Transverse colon (tissue), 4 donors: ENCODE measurements at regions of chr14 and their contacts with region 1.

Region 1: GRCh38 chr14:54338696-54339317 is 58.0 kb upstream of the CDKN3 start:
- DNase-seq: no peak
- H3K4me3 ChIP-seq: no peak overlapping the region
- H3K27ac ChIP-seq: no peak overlapping the region
- H3K4me1 ChIP-seq: peaks cover 0 to 9% (median 4%) of the 10 kb centered on the region in 4 donors
- H3K27me3 ChIP-seq: no peaks in the 10 kb centered on the region
- CTCF ChIP-seq: peak in 3 of 5 experiments; percentile 17 to 32 (median 28)
- EP300 ChIP-seq: no peak
- POLR2A ChIP-seq: no peak

Region 2: GRCh38 chr14:53062856-53063255 is 1276.0 kb before region 1 on chr14:
- in situ Hi-C with region 1: no loop called
- intact Hi-C with region 1: loop called (anchors 5 kb)
- DNase-seq: no peak
- H3K4me3 ChIP-seq: no peak overlapping the region
- H3K27ac ChIP-seq: no peak overlapping the region
- H3K4me1 ChIP-seq: no peaks in the 10 kb centered on the region
- H3K27me3 ChIP-seq: no peaks in the 10 kb centered on the region
- CTCF ChIP-seq: no peak
- EP300 ChIP-seq: no peak
- POLR2A ChIP-seq: no peak

Region 3: GRCh38 chr14:53539489-53540126 is 799.2 kb before region 1 on chr14:
- in situ Hi-C with region 1: loop called (anchors 10 to 25 kb)
- intact Hi-C with region 1: loop called (anchors 10 kb)
- DNase-seq: peak; percentile 78
- H3K4me3 ChIP-seq: no peak overlapping the region
- H3K27ac ChIP-seq: peak overlapping the region; percentile 53 to 77 (median 57)
- H3K4me1 ChIP-seq: peaks cover 0 to 38% (median 7%) of the 10 kb centered on the region in 4 donors
- H3K27me3 ChIP-seq: no peaks in the 10 kb centered on the region
- CTCF ChIP-seq: peak; percentile 81 to 88 (median 86)
- EP300 ChIP-seq: no peak
- POLR2A ChIP-seq: no peak

Region 4: GRCh38 chr14:53979747-53980642 is 358.8 kb before region 1 on chr14:
- in situ Hi-C with region 1: no loop called
- intact Hi-C with region 1: no loop called
- DNase-seq: peak; percentile 21
- H3K4me3 ChIP-seq: no peak overlapping the region
- H3K27ac ChIP-seq: no peak overlapping the region
- H3K4me1 ChIP-seq: no peaks in the 10 kb centered on the region
- H3K27me3 ChIP-seq: no peaks in the 10 kb centered on the region
- CTCF ChIP-seq: no peak
- EP300 ChIP-seq: no peak
- POLR2A ChIP-seq: no peak